ENCODE measurements at regions of chr15 and their contacts with region 1.

Region 1: DNA sequence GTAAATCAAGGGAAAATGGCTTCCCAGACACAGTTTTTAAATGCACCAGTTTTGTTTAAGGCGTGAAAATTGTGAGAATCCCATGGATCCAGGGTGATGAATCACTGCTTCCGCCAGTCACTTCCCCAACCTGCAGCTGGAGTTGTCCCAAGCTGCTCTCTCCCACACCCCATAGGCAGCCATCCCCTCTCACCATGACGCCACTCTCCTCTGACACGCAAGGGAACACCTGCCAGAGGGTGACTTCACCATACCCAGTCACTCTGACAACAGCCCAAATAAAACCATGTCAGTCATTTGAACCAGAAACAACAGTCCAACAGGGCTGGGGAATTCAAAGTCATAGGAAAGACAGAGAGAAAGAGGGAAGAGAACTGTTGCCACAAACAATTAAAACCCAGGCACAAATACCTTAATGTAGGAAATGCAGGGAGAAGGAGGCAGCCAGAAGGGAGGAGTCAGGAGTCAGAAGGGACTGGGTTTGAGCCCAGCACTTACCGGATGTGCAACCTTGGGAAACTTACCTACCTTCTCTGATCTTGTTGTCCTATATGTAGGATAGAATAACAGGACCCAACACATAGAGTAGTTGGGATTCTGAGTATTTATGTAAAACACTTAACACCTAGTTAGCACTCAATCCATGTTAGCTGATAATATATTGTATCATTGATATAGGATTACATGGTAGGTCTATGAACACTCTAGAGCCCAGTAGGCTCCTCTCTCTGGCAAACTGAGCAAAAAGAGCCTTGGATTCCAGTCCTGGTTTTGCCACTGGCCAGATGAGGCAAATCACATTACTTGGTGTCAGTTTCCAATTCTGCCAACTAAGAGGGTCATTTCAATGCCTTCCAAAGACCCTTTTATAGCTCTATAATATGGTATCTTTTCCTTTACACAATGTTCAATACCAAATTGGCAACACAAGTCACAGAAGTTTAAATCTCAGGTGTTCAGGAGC is 326.3 kb upstream of the ICE2 start:
- DNase-seq: peak; percentile 61 to 80
- H3K4me3 ChIP-seq: no peak overlapping the region
- H3K27ac ChIP-seq: peak overlapping the region in 1 of 2 donors; percentile 13
- H3K4me1 ChIP-seq: peaks cover 6 to 7% of the 10 kb centered on the region in 2 donors
- H3K27me3 ChIP-seq: no peaks in the 10 kb centered on the region
- CTCF ChIP-seq: no peak

Region 2: GRCh38 chr15:60751985-60752952 is 53.0 kb before region 1 on chr15:
- intact Hi-C with region 1: loop called (anchors 5 kb)
- DNase-seq: peak in 1 of 2 donors; percentile 74
- H3K4me3 ChIP-seq: peak overlapping the region; percentile 12 to 45
- H3K27ac ChIP-seq: peak overlapping the region; percentile 71 to 75
- H3K4me1 ChIP-seq: peaks cover 0 to 5% of the 10 kb centered on the region in 2 donors
- H3K27me3 ChIP-seq: no peaks in the 10 kb centered on the region
- CTCF ChIP-seq: no peak

Measured in ascending aorta (tissue), 2 donors.